ENCODE measurements at regions of chr14 and their contacts with region 1.

Region 1: GRCh38 chr14:35121887-35122695 is at the starts of genes PPP2R3C and PRORP:
- DNase-seq: peak; percentile 96
- H3K4me3 ChIP-seq: peak within 1 kb of the TSS; percentile 68 to 70 (median 69)
- H3K27ac ChIP-seq: peak within 1 kb of the TSS; percentile 90 to 98 (median 94)
- H3K4me1 ChIP-seq: peaks cover 0 to 41% (median 26%) of the 10 kb centered on the region in 4 donors
- H3K27me3 ChIP-seq: no peaks in the 10 kb centered on the region
- CTCF ChIP-seq: no peak
- EP300 ChIP-seq: no peak
- POLR2A ChIP-seq: peak; percentile 45 to 70
- total RNA-seq, gene PPP2R3C: 25.3 to 44.3 (median 40.5) TPM
- total RNA-seq, gene PRORP: 7.9 to 17.1 (median 13.6) TPM

Region 2: DNA sequence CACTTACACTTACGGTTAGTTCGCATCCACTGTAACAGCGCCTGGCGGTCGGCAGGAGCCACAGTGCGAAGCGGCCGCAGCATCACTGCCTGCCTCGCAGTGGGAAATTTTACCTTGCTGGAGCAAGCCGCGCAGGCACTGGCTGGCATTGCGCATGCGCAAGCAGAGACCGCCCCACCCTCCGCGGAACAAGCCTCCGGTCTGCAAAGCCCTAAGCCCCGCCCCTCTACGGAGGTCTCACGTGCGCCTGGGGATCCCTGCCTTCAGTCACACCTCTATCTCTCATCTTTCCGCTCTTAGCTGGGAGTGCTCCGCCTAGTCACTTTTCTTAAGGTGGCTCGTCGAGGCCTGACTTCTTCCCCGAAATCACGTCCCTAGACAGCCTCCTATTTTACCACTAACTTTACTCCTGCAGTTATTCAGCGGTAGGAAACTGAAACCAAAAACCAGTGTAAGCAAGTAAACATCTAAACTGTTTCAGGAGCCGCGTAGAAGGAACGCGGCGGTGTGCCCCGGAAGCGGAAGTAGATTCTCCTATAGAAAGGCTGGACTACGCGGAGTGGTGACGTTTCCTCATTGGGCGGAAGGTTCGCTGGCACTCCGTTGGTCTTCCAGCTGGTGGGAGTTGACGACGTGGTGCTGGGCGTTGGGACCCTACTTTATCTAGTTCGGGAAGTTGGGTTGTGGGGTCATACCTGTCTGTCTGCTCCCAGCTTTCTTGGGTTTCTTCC is 139.5 kb before region 1 on chr14 and contains the start of gene SRP54:
- intact Hi-C with region 1: loop called (anchors 5 kb)
- DNase-seq: peak; percentile 100
- H3K4me3 ChIP-seq: peak within 1 kb of the TSS; percentile 70 to 88 (median 78)
- H3K27ac ChIP-seq: peak within 1 kb of the TSS; percentile 93 to 98 (median 94)
- H3K4me1 ChIP-seq: peaks cover 0 to 38% (median 34%) of the 10 kb centered on the region in 4 donors
- H3K27me3 ChIP-seq: no peaks in the 10 kb centered on the region
- CTCF ChIP-seq: no peak
- EP300 ChIP-seq: no peak
- POLR2A ChIP-seq: peak; percentile 75 to 85
- total RNA-seq, gene SRP54: 29.9 to 36.1 (median 34.6) TPM

Region 3: GRCh38 chr14:35292051-35292769 is 170.1 kb after region 1 on chr14 and contains the start of gene PSMA6:
- intact Hi-C with region 1: loop called (anchors 5 kb)
- DNase-seq: peak; percentile 99
- H3K4me3 ChIP-seq: peak within 1 kb of the TSS; percentile 77 to 89 (median 80)
- H3K27ac ChIP-seq: peak within 1 kb of the TSS; percentile 89 to 96 (median 92)
- H3K4me1 ChIP-seq: peaks cover 0 to 49% (median 40%) of the 10 kb centered on the region in 4 donors
- H3K27me3 ChIP-seq: no peaks in the 10 kb centered on the region
- CTCF ChIP-seq: no peak
- EP300 ChIP-seq: peak in 1 of 4 donors; percentile 70
- POLR2A ChIP-seq: peak; percentile 81 to 86
- total RNA-seq, gene PSMA6: 104 to 203 (median 169) TPM

Measured in sigmoid colon (tissue), 7 donors.